Ascending aorta (tissue), 2 donors: ENCODE measurements at regions of chr6 and their contacts with region 1.

Region 1: GRCh38 chr6:144248476-144249301 is 36.4 kb upstream of the UTRN start:
- DNase-seq: no peak
- H3K4me3 ChIP-seq: no peak overlapping the region
- H3K27ac ChIP-seq: peak overlapping the region; percentile 34 to 50
- H3K4me1 ChIP-seq: peaks cover 3 to 12% of the 10 kb centered on the region in 2 donors
- H3K27me3 ChIP-seq: no peaks in the 10 kb centered on the region
- CTCF ChIP-seq: no peak

Region 2: GRCh38 chr6:144265390-144265789 is 16.7 kb after region 1 on chr6:
- intact Hi-C with region 1: loop called (anchors 2 kb)
- DNase-seq: no peak
- H3K4me3 ChIP-seq: no peak overlapping the region
- H3K27ac ChIP-seq: peak overlapping the region; percentile 60 to 81
- H3K4me1 ChIP-seq: peaks cover 0 to 24% of the 10 kb centered on the region in 2 donors
- H3K27me3 ChIP-seq: no peaks in the 10 kb centered on the region
- CTCF ChIP-seq: no peak